Right ventricle myocardium superior (tissue), 1 donor: ENCODE measurements at regions of chr18 and their contacts with region 1.

Region 1: DNA sequence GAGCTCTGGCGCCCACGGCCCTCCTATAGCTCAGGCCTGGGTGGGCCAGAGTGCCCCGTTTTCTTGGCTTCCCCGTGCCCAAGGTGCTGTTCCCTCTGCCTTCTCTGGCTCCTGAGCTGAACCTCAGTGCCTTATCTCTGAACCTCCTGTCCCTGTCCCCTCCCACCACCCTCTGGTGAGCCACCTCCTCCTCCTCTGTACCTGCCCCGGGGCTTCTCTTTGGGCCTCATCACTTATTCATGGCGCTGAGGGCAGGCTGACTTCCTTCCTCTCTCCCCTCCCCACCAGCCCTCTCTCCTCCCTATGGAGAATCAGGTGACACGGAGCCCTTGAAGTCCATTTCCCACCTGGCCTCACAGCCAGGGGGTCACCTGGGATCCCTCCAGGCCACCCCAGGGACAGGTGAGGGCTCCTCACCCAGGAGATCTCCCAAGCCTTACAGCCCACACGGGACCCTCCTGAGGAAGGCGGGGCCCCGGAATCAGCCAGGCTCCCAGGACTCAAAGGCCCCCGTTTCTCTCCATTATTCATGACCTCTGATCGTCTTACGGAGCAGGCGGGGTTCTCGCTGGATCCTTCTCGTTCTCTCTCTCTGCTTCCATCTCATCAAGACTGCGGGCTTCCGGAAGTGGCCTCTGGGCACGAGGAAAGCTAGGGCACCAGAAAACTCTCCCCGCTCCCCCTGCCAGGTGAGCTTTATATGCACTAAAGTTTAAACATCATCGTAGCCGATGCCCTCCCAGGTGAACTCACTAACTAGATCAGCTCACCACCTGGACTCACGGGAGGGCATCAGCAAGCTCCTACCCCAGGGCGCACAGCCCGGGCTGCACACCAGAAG is at the start of gene LOXHD1:
- DNase-seq: no peak
- ATAC-seq: no peak
- total RNA-seq, gene LOXHD1: 0.62 TPM

Region 2: GRCh38 chr18:46555724-46556123 is 101.6 kb before region 1 on chr18:
- intact Hi-C with region 1: loop called (anchors 5 kb)
- DNase-seq: no peak
- ATAC-seq: peak; percentile 58